Endothelial cell of umbilical vein (primary cell): ENCODE measurements at regions of chr2 and their contacts with region 1.

Region 1: GRCh38 chr2:133817680-133818579 is 249.7 kb upstream of the NCKAP5 start:
- DNase-seq: peak; percentile 98
- H3K4me3 ChIP-seq: no peak overlapping the region
- H3K27ac ChIP-seq: peak overlapping the region; percentile 98
- H3K4me1 ChIP-seq: peaks cover 88% of the 10 kb centered on the region
- H3K27me3 ChIP-seq: no peaks in the 10 kb centered on the region
- CTCF ChIP-seq: no peak
- POLR2A ChIP-seq: peak; percentile 57

Region 2: GRCh38 chr2:132670496-132671150 is 1147.3 kb before region 1 on chr2:
- CTCF ChIA-PET with region 1: no interaction called
- POLR2A ChIA-PET with region 1: no interaction called
- dilution Hi-C with region 1: no loop called
- intact Hi-C with region 1: loop called (anchors 1 kb)
- DNase-seq: peak; percentile 44
- H3K4me3 ChIP-seq: peak overlapping the region; percentile 55 to 76 (median 75)
- H3K27ac ChIP-seq: peak overlapping the region; percentile 69
- H3K4me1 ChIP-seq: peaks cover 30% of the 10 kb centered on the region
- H3K27me3 ChIP-seq: no peaks in the 10 kb centered on the region
- CTCF ChIP-seq: no peak
- POLR2A ChIP-seq: peak; percentile 54

Region 3: DNA sequence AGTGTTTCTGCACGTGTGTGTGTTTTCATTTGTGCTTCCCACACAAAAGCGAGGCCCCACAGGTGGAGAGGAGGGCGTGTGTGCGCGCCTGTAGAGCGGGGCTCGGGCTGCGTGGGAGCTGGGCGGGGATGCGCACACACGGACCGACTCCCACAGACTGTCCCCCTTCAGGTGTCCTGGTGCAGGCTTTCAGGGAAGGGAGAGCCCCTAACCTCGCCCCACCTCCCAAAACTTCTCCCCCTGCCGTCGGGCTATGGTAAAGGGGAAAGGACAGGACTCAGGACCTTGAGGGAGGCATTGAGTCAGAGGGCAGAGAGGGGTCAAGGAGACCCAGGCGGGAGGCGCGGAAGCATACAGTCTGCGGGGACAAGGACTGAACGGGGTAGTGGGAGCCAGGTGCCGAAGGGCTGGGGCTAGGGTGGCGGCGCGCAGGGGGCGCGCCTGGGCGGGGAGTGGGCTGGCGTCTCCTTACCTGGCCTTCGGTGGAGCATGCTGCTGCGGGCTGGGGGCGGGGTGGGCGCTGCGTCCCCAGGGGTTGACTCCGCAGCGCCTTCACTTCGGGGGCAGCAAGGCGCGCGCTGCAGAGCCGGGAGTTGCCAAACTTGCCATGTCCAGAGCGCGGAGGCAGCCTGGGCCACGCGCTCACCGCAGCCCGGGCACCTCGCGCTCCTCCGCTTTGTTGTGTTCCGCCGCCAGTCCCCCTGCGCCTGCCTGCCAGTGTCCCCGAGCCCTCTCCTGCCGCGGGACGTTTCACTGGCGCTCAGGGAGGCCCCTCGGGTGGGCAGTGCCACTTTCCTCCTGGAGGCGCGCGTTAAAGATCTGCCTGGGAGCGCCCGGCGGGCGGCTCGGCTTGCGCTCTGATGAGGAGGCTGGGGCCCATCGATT is 551.6 kb before region 1 on chr2:
- CTCF ChIA-PET with region 1: no interaction called
- POLR2A ChIA-PET with region 1: no interaction called
- dilution Hi-C with region 1: no loop called
- intact Hi-C with region 1: loop called (anchors 10 kb)
- DNase-seq: peak; percentile 13
- H3K4me3 ChIP-seq: peak overlapping the region; percentile 21 to 57 (median 41)
- H3K27ac ChIP-seq: no peak overlapping the region
- H3K4me1 ChIP-seq: peaks cover 4% of the 10 kb centered on the region
- H3K27me3 ChIP-seq: no peaks in the 10 kb centered on the region
- CTCF ChIP-seq: no peak
- POLR2A ChIP-seq: no peak

Region 4: GRCh38 chr2:133579274-133579673 is 238.7 kb before region 1 on chr2:
- CTCF ChIA-PET with region 1: interaction called, 3 read pairs
- POLR2A ChIA-PET with region 1: no interaction called
- dilution Hi-C with region 1: no loop called
- intact Hi-C with region 1: loop called (anchors 1 kb)
- DNase-seq: peak; percentile 93
- H3K4me3 ChIP-seq: no peak overlapping the region
- H3K27ac ChIP-seq: peak overlapping the region; percentile 45
- H3K4me1 ChIP-seq: peaks cover 40% of the 10 kb centered on the region
- H3K27me3 ChIP-seq: no peaks in the 10 kb centered on the region
- CTCF ChIP-seq: no peak
- POLR2A ChIP-seq: peak; percentile 27

Region 5: GRCh38 chr2:133791191-133791590 is 26.7 kb before region 1 on chr2:
- CTCF ChIA-PET with region 1: interaction called, 3 read pairs
- POLR2A ChIA-PET with region 1: no interaction called
- dilution Hi-C with region 1: no loop called
- intact Hi-C with region 1: loop called (anchors 2 kb)
- DNase-seq: peak; percentile 46
- H3K4me3 ChIP-seq: no peak overlapping the region
- H3K27ac ChIP-seq: peak overlapping the region; percentile 62
- H3K4me1 ChIP-seq: peaks cover 13% of the 10 kb centered on the region
- H3K27me3 ChIP-seq: no peaks in the 10 kb centered on the region
- CTCF ChIP-seq: no peak
- POLR2A ChIP-seq: no peak

Region 6: DNA sequence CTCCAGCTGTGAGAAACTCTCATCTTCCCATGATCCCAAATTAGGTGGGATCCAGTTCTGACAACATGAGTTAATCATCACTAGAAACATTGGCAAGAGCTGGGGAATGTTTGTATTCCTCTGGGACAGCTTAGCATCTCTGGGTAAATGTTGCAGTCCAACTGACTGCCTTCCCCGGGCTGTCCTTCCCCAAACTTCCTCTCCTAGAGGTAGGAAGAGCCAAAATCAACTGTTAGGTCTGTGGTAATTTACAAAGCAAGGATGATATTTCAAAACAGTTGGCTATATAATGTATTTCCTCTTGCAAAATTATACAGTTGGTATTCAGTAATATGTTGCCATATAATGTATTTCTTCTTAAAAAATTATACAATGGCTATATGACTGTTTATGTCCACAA is 584.5 kb after region 1 on chr2:
- CTCF ChIA-PET with region 1: no interaction called
- POLR2A ChIA-PET with region 1: no interaction called
- dilution Hi-C with region 1: no loop called
- intact Hi-C with region 1: loop called (anchors 1 kb)
- DNase-seq: peak; percentile 21
- H3K4me3 ChIP-seq: no peak overlapping the region
- H3K27ac ChIP-seq: no peak overlapping the region
- H3K4me1 ChIP-seq: peaks cover 60% of the 10 kb centered on the region
- H3K27me3 ChIP-seq: no peaks in the 10 kb centered on the region
- CTCF ChIP-seq: no peak
- POLR2A ChIP-seq: no peak